ENCODE measurements at regions of chr12 and their contacts with region 1.

Region 1: GRCh38 chr12:120086801-120087621 is 29.5 kb downstream of the RAB35 start:
- DNase-seq: peak; percentile 100
- ATAC-seq: peak; percentile 97
- H3K4me3 Mint-ChIP-seq: peak overlapping the region; percentile 72
- H3K27ac Mint-ChIP-seq: peak overlapping the region; percentile 84
- H3K4me1 Mint-ChIP-seq: peaks cover 28% of the 10 kb centered on the region
- H3K27me3 Mint-ChIP-seq: no peaks in the 10 kb centered on the region

Region 2: GRCh38 chr12:119988782-119989668 is 98.0 kb before region 1 on chr12 and contains the start of gene BICDL1:
- CTCF ChIA-PET with region 1: interaction called, 31 read pairs
- POLR2A ChIA-PET with region 1: interaction called, 7 read pairs
- DNase-seq: peak; percentile 97
- ATAC-seq: peak; percentile 87
- H3K4me3 Mint-ChIP-seq: peak within 1 kb of the TSS; percentile 86
- H3K27ac Mint-ChIP-seq: peak within 1 kb of the TSS; percentile 80
- H3K4me1 Mint-ChIP-seq: peaks cover 34% of the 10 kb centered on the region
- H3K27me3 Mint-ChIP-seq: peaks cover 2% of the 10 kb centered on the region
- total RNA-seq, gene BICDL1: 62.4 to 64.8 TPM

Region 3: GRCh38 chr12:120012067-120012621 is 74.9 kb before region 1 on chr12:
- CTCF ChIA-PET with region 1: interaction called, 28 read pairs
- POLR2A ChIA-PET with region 1: interaction called, 11 read pairs
- DNase-seq: peak; percentile 83
- ATAC-seq: peak; percentile 75
- H3K4me3 Mint-ChIP-seq: peak overlapping the region; percentile 19
- H3K27ac Mint-ChIP-seq: peak overlapping the region; percentile 86
- H3K4me1 Mint-ChIP-seq: peaks cover 85% of the 10 kb centered on the region
- H3K27me3 Mint-ChIP-seq: no peaks in the 10 kb centered on the region

Region 4: GRCh38 chr12:120075034-120075616 is 11.9 kb before region 1 on chr12:
- CTCF ChIA-PET with region 1: interaction called, 10 read pairs
- POLR2A ChIA-PET with region 1: no interaction called
- DNase-seq: no peak
- ATAC-seq: peak; percentile 45
- H3K4me3 Mint-ChIP-seq: no peak overlapping the region
- H3K27ac Mint-ChIP-seq: peak overlapping the region; percentile 28
- H3K4me1 Mint-ChIP-seq: peaks cover 19% of the 10 kb centered on the region
- H3K27me3 Mint-ChIP-seq: no peaks in the 10 kb centered on the region

Region 5: DNA sequence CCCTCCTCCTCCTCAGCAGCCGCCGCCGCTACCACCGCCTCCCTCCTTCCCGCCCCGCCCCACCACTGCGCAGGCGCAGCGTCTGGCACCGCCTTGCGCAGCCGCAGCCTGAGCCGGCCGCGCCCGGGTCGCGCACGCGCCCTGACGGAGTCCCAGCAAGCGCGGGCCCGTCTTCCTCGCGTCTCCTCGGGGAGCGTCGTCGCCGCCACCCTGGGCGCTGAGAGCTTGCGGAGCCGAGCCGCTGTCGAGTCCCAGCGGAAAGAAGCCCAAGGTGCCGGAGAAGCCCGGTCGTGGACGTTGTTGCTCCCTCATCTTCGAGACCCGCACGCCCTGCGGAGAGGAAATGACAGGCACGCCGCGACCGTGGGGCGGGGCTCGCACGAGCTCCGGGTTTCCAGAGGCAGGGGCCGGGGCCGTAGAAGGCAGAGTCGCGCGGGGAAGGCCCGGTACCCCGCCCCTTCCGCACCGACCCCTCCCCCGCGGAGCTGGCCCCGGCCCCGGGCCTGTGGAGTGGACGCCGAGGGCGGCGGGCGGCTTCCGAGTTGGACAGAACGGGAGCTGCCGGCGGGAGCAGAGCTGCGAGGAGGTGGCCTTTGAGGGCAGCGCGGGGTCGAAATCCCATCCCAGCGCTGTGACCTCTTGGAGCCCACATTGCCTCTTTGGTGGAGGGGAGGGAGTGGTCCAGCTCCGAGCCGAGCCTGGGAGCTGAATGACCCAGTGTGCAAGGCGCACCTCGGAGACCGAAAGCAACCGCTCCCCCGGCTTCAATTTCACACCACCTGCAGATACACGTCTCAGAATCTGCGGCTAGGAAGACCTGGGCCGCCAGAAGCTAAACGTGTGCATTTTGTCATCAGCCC is 30.0 kb after region 1 on chr12:
- CTCF ChIA-PET with region 1: interaction called, 13 read pairs
- POLR2A ChIA-PET with region 1: interaction called, 6 read pairs
- DNase-seq: peak; percentile 98
- ATAC-seq: peak; percentile 83
- H3K4me3 Mint-ChIP-seq: peak overlapping the region; percentile 81
- H3K27ac Mint-ChIP-seq: peak overlapping the region; percentile 78
- H3K4me1 Mint-ChIP-seq: peaks cover 78% of the 10 kb centered on the region
- H3K27me3 Mint-ChIP-seq: no peaks in the 10 kb centered on the region